ENCODE measurements at regions of chr4 and their contacts with region 1.

Region 1: GRCh38 chr4:114318309-114318708 is 280.3 kb upstream of the UGT8 start:
- DNase-seq: peak; percentile 45
- ATAC-seq: peak; percentile 62
- H3K4me3 ChIP-seq: no peak overlapping the region
- H3K27ac ChIP-seq: no peak overlapping the region
- H3K4me1 ChIP-seq: 0 out of 2 replicates have a peak, but pooled peaks cover 6% of the 10 kb centered on the region
- H3K27me3 ChIP-seq: no peaks in the 10 kb centered on the region
- CTCF ChIP-seq: no peak

Region 2: DNA sequence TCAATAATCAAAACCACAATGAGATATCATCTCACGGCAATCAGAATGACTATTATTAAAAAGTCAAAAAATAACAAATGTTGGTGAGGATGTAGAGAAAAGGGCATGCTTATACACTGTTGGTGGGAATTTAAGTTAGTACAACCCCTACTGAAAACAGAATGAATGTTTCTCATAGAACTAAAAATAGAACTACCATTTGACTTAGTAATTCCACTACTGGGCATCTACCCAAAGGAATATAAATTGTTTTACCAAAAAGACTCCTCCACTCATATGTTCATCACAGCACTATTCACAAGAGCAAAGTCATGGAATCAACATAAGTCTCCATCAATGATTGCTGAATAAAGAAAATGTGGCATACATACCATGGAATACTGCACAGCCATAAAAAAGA is 60.8 kb before region 1 on chr4:
- CTCF ChIA-PET with region 1: no interaction called
- POLR2A ChIA-PET with region 1: no interaction called
- intact Hi-C with region 1: loop called (anchors 5 kb)
- DNase-seq: peak; percentile 6
- ATAC-seq: peak; percentile 38; the same call in 1 of the 2 replicates
- H3K4me3 ChIP-seq: no peak overlapping the region
- H3K27ac ChIP-seq: peak overlapping the region; percentile 34
- H3K4me1 ChIP-seq: 0 out of 2 replicates have a peak, but pooled peaks cover 4% of the 10 kb centered on the region
- H3K27me3 ChIP-seq: no peaks in the 10 kb centered on the region
- CTCF ChIP-seq: no peak

Region 3: GRCh38 chr4:114334884-114335330 is 16.6 kb after region 1 on chr4:
- CTCF ChIA-PET with region 1: no interaction called
- POLR2A ChIA-PET with region 1: no interaction called
- intact Hi-C with region 1: no loop called
- DNase-seq: no peak
- ATAC-seq: no peak
- H3K4me3 ChIP-seq: no peak overlapping the region
- H3K27ac ChIP-seq: no peak overlapping the region
- H3K4me1 ChIP-seq: no peaks in the 10 kb centered on the region
- H3K27me3 ChIP-seq: no peaks in the 10 kb centered on the region
- CTCF ChIP-seq: no peak

Region 4: DNA sequence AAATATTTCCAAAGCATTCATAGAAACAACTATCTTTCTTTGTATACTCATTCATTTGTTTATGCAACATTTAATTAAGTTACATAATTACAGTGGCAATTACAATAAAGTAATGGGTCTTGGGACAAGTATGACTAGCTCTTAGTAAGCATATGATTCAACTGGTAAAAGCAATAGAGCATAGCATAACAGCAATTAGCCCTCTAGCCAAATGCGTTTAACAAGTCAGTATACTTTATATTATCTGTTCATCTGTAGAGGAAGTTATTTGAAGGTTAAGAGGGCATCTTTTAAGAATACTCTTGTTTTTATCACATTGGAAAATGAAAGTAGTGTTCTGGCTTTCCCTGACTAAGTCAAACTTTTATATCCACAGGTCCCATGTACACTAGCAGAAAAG is 82.2 kb after region 1 on chr4:
- CTCF ChIA-PET with region 1: no interaction called
- POLR2A ChIA-PET with region 1: no interaction called
- intact Hi-C with region 1: no loop called
- DNase-seq: peak; percentile 46
- ATAC-seq: peak; percentile 87
- H3K4me3 ChIP-seq: no peak overlapping the region
- H3K27ac ChIP-seq: no peak overlapping the region
- H3K4me1 ChIP-seq: 0 out of 2 replicates have a peak, but pooled peaks cover 4% of the 10 kb centered on the region
- H3K27me3 ChIP-seq: no peaks in the 10 kb centered on the region
- CTCF ChIP-seq: no peak

Region 5: GRCh38 chr4:114535725-114536124 is 217.4 kb after region 1 on chr4:
- CTCF ChIA-PET with region 1: no interaction called
- POLR2A ChIA-PET with region 1: no interaction called
- intact Hi-C with region 1: no loop called
- DNase-seq: no peak
- ATAC-seq: no peak
- H3K4me3 ChIP-seq: no peak overlapping the region
- H3K27ac ChIP-seq: no peak overlapping the region
- H3K4me1 ChIP-seq: no peaks in the 10 kb centered on the region
- H3K27me3 ChIP-seq: no peaks in the 10 kb centered on the region
- CTCF ChIP-seq: no peak